ENCODE measurements at regions of chr4 and their contacts with region 1.

Region 1: GRCh38 chr4:38132107-38132673 is 172.0 kb downstream of the PTTG2 start:
- DNase-seq: peak; percentile 85
- H3K4me3 Mint-ChIP-seq: peak overlapping the region; percentile 56
- H3K27ac Mint-ChIP-seq: peak overlapping the region; percentile 96
- H3K4me1 Mint-ChIP-seq: peaks cover 76% of the 10 kb centered on the region
- H3K27me3 Mint-ChIP-seq: peaks cover 1% of the 10 kb centered on the region

Region 2: GRCh38 chr4:37891260-37892159 is 240.7 kb before region 1 on chr4:
- CTCF ChIA-PET with region 1: no interaction called
- POLR2A ChIA-PET with region 1: interaction called, 3 read pairs
- intact Hi-C with region 1: loop called (anchors 2 kb)
- DNase-seq: peak; percentile 71
- H3K4me3 Mint-ChIP-seq: peak overlapping the region; percentile 87
- H3K27ac Mint-ChIP-seq: peak overlapping the region; percentile 90
- H3K4me1 Mint-ChIP-seq: peaks cover 32% of the 10 kb centered on the region
- H3K27me3 Mint-ChIP-seq: peaks cover 4% of the 10 kb centered on the region

Region 3: DNA sequence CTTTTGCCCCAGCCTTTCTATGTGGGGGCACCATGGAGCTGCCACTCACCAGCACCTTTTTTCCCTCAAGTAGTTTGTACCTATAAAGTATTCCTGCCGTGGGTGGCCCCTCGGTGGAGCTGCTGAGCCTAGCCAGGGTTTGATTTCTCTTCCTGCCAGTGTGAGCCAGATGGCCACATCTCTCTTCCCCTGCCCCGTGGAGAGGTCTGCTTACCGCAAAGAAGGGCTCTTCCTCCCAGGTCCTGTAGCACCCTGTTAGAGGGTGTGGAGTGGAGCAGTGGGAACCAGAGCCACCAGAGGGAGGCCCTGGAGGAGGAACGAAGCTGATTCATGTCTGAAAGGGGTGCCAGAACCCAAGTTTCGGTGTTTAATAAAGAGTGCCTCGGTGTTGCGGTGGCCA is 76.6 kb before region 1 on chr4:
- CTCF ChIA-PET with region 1: no interaction called
- POLR2A ChIA-PET with region 1: no interaction called
- intact Hi-C with region 1: no loop called
- DNase-seq: no peak
- H3K4me3 Mint-ChIP-seq: no peak overlapping the region
- H3K27ac Mint-ChIP-seq: no peak overlapping the region
- H3K4me1 Mint-ChIP-seq: no peaks in the 10 kb centered on the region
- H3K27me3 Mint-ChIP-seq: no peaks in the 10 kb centered on the region

Region 4: GRCh38 chr4:38078590-38079421 is 53.4 kb before region 1 on chr4:
- CTCF ChIA-PET with region 1: interaction called, 4 read pairs
- POLR2A ChIA-PET with region 1: no interaction called
- intact Hi-C with region 1: loop called (anchors 1 kb)
- DNase-seq: peak; percentile 50
- H3K4me3 Mint-ChIP-seq: no peak overlapping the region
- H3K27ac Mint-ChIP-seq: peak overlapping the region; percentile 75
- H3K4me1 Mint-ChIP-seq: peaks cover 37% of the 10 kb centered on the region
- H3K27me3 Mint-ChIP-seq: no peaks in the 10 kb centered on the region

Region 5: DNA sequence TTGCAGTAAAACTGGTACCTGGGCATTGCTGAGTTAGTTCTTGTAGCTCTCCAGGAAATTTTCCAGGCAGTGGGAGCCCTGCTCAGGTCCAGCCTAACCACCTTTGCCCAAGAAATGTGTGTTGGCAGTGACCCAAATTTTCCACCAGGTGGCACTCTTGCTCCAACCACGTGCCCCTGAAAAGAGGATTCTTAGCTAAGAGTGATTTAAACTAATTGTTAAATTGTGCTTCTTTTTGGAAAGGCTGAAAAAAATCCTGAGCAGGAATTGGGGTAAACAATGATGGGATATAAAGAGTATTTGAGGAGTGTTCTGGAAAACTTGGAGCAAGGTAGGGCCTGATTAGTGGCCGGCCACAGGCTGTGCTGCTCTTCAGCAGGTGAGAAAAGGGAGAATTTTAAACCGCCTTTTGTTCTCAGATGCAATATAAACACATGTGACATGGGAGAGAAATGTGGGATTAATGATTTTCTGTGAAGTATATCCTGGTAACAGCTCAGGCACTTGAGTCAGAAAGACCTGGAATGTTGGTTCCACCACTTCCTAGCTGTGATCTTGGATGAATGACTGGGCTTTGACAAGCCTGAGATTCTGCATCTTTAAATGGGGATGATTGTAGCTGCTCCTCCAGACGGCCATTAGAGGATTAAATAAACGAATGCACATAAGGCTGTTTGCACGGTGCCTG is 47.6 kb after region 1 on chr4:
- CTCF ChIA-PET with region 1: interaction called, 10 read pairs
- POLR2A ChIA-PET with region 1: interaction called, 12 read pairs
- intact Hi-C with region 1: loop called (anchors 1 kb)
- DNase-seq: peak; percentile 83
- H3K4me3 Mint-ChIP-seq: no peak overlapping the region
- H3K27ac Mint-ChIP-seq: peak overlapping the region; percentile 14
- H3K4me1 Mint-ChIP-seq: peaks cover 39% of the 10 kb centered on the region
- H3K27me3 Mint-ChIP-seq: no peaks in the 10 kb centered on the region

Region 6: GRCh38 chr4:38663801-38664705 is 531.9 kb after region 1 on chr4 and contains the start of gene KLF3:
- CTCF ChIA-PET with region 1: no interaction called
- POLR2A ChIA-PET with region 1: interaction called, 3 read pairs
- intact Hi-C with region 1: loop called (anchors 1 kb)
- DNase-seq: peak; percentile 86
- H3K4me3 Mint-ChIP-seq: peak within 1 kb of the TSS; percentile 83
- H3K27ac Mint-ChIP-seq: peak within 1 kb of the TSS; percentile 68
- H3K4me1 Mint-ChIP-seq: peaks cover 61% of the 10 kb centered on the region
- H3K27me3 Mint-ChIP-seq: no peaks in the 10 kb centered on the region
- total RNA-seq, gene KLF3: 9.1 to 9.9 TPM

Region 7: DNA sequence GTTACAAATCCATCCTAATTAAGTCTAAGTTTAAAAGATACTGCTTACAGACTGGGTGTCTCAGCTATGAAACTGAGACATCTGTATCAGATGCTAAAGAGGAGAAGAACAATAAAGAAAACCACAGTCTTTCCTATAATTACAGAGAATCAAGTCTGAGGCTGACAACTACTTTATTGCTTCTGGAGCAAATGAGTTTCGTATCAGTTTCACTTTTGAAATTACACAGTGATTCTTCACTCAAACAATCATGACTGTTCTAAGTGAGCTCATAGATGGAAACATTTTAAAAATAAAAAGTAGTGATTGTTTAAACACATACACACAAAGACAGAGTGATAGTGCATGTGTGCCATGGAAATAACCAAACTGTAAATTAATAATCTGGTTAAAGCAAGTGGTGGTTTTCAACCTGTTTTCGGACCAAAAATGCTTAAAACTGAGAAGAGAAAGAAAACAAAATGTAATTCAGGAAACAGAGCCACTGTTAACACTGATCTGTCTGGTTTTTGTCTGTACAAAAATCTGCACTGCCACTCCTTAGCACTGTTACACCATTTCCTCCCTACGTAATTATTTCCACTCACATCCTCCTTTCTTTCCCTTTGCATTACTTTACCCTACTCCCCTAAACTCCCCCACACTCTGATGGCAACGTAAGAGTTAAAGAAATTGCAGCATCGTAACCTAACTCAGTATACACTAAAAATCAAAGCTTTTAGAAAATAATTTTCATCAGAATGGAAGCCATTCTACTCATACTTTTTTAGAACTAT is 1221.5 kb after region 1 on chr4:
- CTCF ChIA-PET with region 1: no interaction called
- POLR2A ChIA-PET with region 1: interaction called, 3 read pairs
- intact Hi-C with region 1: loop called (anchors 1 kb)
- DNase-seq: no peak
- H3K4me3 Mint-ChIP-seq: peak overlapping the region; percentile 60
- H3K27ac Mint-ChIP-seq: peak overlapping the region; percentile 94
- H3K4me1 Mint-ChIP-seq: peaks cover 75% of the 10 kb centered on the region
- H3K27me3 Mint-ChIP-seq: no peaks in the 10 kb centered on the region

Measured in activated CD4-positive, alpha-beta memory T cell treated with anti-CD3 and anti-CD28 coated beads for 36 hours (primary cell).